ENCODE measurements at regions of chr14 and their contacts with region 1.

Region 1: DNA sequence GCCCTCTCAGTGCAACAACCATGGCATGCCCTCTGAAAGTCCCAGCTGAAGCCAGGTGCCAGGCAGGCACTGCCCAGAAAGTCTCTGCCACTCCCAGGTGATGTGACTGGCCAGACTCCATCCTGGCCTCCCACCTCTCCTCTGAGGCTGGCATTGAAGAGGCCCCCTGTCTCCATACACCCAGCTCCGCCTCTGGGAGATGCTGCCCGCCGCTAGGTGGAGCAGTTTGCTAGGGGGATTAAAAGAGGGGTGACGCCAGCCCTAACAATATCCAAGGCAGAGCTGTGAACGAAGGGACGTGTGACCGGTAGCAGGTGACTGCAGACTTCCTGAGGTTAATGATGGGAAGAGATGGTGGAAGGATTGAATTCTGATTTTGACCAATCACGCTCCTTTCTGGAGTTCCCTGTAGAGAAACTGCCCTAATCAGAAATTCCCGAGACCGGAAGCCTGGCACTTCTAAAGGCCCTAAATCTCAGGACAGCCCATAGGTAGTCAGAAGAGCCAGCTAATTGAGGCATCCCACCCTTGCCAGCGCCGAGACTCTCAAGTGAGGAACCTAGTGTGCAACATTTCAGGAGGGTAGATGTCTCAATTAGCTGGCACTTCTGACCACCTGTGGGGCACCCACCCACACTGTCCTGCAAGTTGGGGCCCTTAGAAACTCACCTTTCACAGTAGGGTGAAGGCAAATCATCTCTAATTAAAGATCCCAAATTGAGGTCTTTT is 8.3 kb upstream of the PLEK2 start:
- DNase-seq: peak in 1 of 2 experiments; percentile 87
- H3K4me3 ChIP-seq: no peak overlapping the region
- H3K27ac ChIP-seq: no peak overlapping the region
- H3K4me1 ChIP-seq: no peaks in the 10 kb centered on the region
- H3K27me3 ChIP-seq: no peaks in the 10 kb centered on the region
- CTCF ChIP-seq: peak; percentile 71 to 82 (median 74)
- EP300 ChIP-seq: no peak
- POLR2A ChIP-seq: no peak
- RAD21 ChIP-seq: peak; percentile 67 to 78

Region 2: DNA sequence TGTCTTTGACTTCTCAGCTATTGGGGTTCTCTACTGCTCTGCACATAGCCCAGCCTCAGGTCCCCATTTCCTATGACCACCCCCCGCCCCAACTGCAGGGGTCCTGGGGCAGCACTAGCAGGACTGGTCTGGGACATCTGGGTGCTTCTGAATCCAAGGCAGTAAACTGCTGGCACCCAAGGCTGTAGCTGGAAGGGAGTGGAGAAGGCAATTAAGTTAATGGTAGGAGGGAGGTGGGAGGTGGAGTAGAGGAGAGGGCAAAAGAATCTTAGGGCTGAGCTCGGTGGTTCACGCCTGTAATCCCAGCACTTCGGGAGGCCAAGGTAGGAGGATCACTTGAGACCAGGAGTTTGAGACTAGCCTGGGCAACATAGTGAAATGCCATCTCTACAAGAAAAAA is 19.8 kb before region 1 on chr14:
- CTCF ChIA-PET with region 1: interaction called, 13 read pairs
- POLR2A ChIA-PET with region 1: no interaction called
- DNase-seq: peak in 1 of 2 experiments; percentile 11
- H3K4me3 ChIP-seq: no peak overlapping the region
- H3K27ac ChIP-seq: no peak overlapping the region
- H3K4me1 ChIP-seq: no peaks in the 10 kb centered on the region; a peak in 1 of 7 replicates
- H3K27me3 ChIP-seq: no peaks in the 10 kb centered on the region; a peak in 1 of 7 replicates
- CTCF ChIP-seq: no peak
- EP300 ChIP-seq: no peak
- POLR2A ChIP-seq: no peak
- RAD21 ChIP-seq: no peak

Region 3: GRCh38 chr14:67405771-67406170 is 14.5 kb before region 1 on chr14:
- CTCF ChIA-PET with region 1: interaction called, 18 read pairs
- POLR2A ChIA-PET with region 1: interaction called, 3 read pairs
- DNase-seq: no peak
- H3K4me3 ChIP-seq: no peak overlapping the region
- H3K27ac ChIP-seq: no peak overlapping the region
- H3K4me1 ChIP-seq: 0 out of 7 replicates have a peak, but pooled peaks cover 0 to 3% (median 0%) of the 10 kb centered on the region in 4 experiments
- H3K27me3 ChIP-seq: no peaks in the 10 kb centered on the region; a peak in 1 of 7 replicates
- CTCF ChIP-seq: no peak
- EP300 ChIP-seq: no peak
- POLR2A ChIP-seq: no peak
- RAD21 ChIP-seq: no peak

Region 4: DNA sequence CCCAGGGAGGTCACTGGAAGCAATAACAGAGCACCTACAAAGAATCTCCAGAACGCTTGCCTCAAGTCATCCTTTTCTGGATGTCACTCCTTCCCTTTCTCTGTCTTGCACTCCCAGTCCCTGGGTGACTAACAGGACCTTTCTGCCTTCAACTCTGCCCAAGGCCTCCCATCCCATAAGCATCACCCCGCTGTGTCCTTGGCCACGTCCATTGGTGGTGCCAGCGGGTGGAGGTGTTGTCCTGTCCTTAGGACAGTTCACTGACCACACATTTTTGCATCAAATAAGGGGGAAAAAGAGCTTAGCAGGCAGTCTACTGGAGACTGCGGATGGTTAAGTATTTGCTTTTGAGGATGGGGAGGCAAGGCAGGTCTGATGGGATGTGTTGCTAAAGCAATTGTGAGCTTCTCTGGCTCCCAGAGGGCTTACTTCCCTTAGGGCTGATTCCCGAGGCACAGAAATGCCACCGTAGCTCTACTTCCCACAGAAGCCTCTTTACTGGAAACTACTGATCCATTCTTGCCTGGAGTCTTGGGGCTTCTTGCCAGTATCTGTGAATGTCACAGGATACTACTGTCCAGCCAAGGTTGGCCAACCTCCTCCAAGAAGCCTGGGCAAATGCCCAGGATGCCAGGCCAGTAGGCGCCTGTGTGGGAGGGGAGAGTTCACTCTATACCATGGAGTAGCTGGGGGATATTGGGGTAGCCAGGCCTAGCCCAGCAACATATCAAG is 15.5 kb after region 1 on chr14:
- CTCF ChIA-PET with region 1: interaction called, 115 read pairs
- POLR2A ChIA-PET with region 1: interaction called, 3 read pairs
- DNase-seq: no peak
- H3K4me3 ChIP-seq: no peak overlapping the region
- H3K27ac ChIP-seq: no peak overlapping the region
- H3K4me1 ChIP-seq: no peaks in the 10 kb centered on the region
- H3K27me3 ChIP-seq: no peaks in the 10 kb centered on the region
- CTCF ChIP-seq: no peak
- EP300 ChIP-seq: no peak
- POLR2A ChIP-seq: no peak
- RAD21 ChIP-seq: peak in 1 of 2 experiments; percentile 9; a peak in 1 of 4 replicates